ENCODE measurements at regions of chr2 and their contacts with region 1.

Region 1: DNA sequence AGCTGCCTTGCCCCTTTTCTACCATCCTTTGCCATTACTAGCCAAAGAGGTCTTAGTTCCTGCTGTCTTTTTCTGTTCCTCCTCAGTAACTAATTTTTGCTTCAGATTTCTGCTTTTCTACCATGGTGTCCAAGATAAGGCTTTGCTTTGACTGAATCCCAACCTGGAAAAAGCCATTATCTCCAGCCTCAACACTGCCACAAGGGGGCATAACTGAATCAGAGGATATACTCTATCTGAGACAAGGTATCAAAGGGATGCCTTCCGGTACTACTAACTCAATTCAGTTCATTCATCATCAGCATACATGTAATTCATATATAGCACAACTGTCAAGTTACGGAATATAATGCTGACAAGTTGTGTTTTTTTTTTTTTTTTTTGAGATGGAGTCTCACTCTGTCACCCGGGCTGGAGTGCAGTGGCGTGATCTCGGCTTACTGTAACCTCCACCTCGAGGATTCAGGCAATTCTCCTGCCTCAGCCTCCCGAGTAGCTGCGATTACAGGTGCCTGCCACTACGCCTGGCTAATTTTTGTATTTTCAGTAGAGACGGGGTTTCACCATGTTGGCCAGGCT is 11.4 kb downstream of the OSGEPL1 start:
- DNase-seq: peak; percentile 43 to 63 (median 60)
- H3K4me3 ChIP-seq: no peak overlapping the region
- H3K27ac ChIP-seq: no peak overlapping the region
- H3K4me1 ChIP-seq: no peaks in the 10 kb centered on the region
- H3K27me3 ChIP-seq: no peaks in the 10 kb centered on the region

Region 2: GRCh38 chr2:189762551-189763298 is 11.6 kb after region 1 on chr2 and contains the start of gene OSGEPL1:
- CTCF ChIA-PET with region 1: interaction called, 49 read pairs
- POLR2A ChIA-PET with region 1: no interaction called
- DNase-seq: peak; percentile 98 to 99 (median 99)
- H3K4me3 ChIP-seq: peak within 1 kb of the TSS; percentile 81 to 99 (median 85)
- H3K27ac ChIP-seq: peak within 1 kb of the TSS; percentile 75 to 88
- H3K4me1 ChIP-seq: peaks cover 9 to 25% (median 16%) of the 10 kb centered on the region in 4 experiments
- H3K27me3 ChIP-seq: no peaks in the 10 kb centered on the region

Region 3: DNA sequence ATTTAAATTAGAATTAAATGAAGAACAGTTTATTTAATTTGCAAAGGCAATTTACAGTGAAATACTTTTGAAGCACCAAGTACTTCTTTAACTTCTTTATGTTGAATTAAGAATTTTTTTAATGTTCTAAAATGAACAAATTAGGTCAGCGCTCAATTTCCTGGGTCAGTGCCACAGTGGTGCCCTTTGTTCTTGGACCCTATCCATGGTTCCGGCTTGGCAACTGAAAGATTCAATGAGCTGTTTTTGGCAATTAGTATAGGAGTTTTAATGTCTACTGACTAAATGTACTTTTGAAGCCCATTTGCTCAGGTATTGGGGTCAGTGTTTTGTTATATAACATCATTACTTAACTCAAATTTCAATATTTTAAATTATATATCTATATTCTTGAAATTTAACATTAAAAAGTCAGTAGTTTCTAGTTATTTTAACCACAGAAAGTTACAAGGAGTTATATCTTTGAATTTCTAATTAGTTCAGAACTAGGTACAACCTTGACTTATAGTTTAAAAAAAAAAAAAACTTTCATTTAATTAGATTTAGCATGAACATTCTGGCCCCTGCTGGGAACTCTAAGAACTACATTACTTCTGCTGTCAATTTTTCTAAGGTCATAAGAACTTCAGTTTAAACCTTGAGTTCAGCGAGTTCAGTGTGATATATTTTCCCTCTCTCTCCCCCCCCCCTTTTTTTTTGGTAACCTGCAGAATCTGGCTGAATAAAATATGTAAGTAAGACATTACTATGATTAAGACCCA is 318.9 kb after region 1 on chr2:
- CTCF ChIA-PET with region 1: interaction called, 17 read pairs
- POLR2A ChIA-PET with region 1: no interaction called
- DNase-seq: peak; percentile 80 to 88 (median 81)
- H3K4me3 ChIP-seq: no peak overlapping the region
- H3K27ac ChIP-seq: no peak overlapping the region
- H3K4me1 ChIP-seq: no peaks in the 10 kb centered on the region
- H3K27me3 ChIP-seq: no peaks in the 10 kb centered on the region

Measured in common myeloid progenitor, CD34-positive (primary cell).